AG04450 (cell line): ENCODE measurements at regions of chr7 and their contacts with region 1.

Region 1: GRCh38 chr7:73606801-73607691 is 17.3 kb downstream of the MLXIPL start:
- DNase-seq: no peak
- H3K4me3 ChIP-seq: no peak overlapping the region; the same call in 1 of the 2 replicates
- H3K27ac ChIP-seq: no peak overlapping the region
- H3K27me3 ChIP-seq: peaks cover 9% of the 10 kb centered on the region
- CTCF ChIP-seq: peak; percentile 95

Region 2: GRCh38 chr7:73585196-73585595 is 21.9 kb before region 1 on chr7:
- CTCF ChIA-PET with region 1: interaction called, 12 read pairs
- POLR2A ChIA-PET with region 1: no interaction called
- DNase-seq: no peak
- H3K4me3 ChIP-seq: no peak overlapping the region
- H3K27ac ChIP-seq: no peak overlapping the region
- H3K27me3 ChIP-seq: no peaks in the 10 kb centered on the region
- CTCF ChIP-seq: no peak

Region 3: GRCh38 chr7:73667344-73668102 is 60.5 kb after region 1 on chr7 and contains the start of gene VPS37D:
- CTCF ChIA-PET with region 1: interaction called, 16 read pairs
- POLR2A ChIA-PET with region 1: interaction called, 4 read pairs
- DNase-seq: peak; percentile 57
- H3K4me3 ChIP-seq: peak within 1 kb of the TSS; percentile 73
- H3K27ac ChIP-seq: no peak within 1 kb of the TSS
- H3K27me3 ChIP-seq: peaks cover 6% of the 10 kb centered on the region
- CTCF ChIP-seq: peak; percentile 64
- polyA plus RNA-seq, gene VPS37D: 1.8 and 3.7 TPM in 2 replicates

Region 4: DNA sequence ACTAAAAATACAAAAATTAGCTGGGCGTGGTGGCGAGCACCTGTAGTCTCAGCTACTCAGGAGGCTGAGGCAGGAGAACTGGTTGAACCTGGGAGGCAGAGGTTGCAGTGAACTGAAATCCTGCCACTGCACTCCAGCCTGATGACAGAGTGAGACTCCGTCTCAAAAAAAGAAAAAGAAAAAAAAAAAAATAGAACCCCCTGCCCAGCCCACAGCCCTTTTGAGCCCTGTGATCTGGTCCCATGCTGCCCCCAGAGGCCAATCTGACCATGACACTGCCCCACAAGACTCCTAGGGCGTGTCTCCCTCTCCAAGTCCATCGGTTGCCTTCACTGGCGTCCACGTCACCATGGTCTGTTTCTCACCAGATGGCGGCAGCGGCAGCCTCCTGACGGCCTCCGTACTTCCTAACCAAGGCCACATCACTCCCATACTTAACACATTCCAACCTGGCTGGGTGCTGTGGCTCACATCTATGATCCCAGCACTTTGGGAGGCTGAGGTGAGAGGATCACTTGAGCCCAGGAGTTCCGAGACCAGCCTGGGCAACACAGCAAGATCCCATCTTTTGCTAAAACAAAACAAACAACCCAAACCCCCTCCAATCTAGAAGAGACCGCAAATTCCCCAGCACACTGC is 94.4 kb after region 1 on chr7:
- CTCF ChIA-PET with region 1: interaction called, 17 read pairs
- POLR2A ChIA-PET with region 1: no interaction called
- DNase-seq: no peak
- H3K4me3 ChIP-seq: no peak overlapping the region
- H3K27ac ChIP-seq: no peak overlapping the region
- H3K27me3 ChIP-seq: no peaks in the 10 kb centered on the region
- CTCF ChIP-seq: peak; percentile 60

Region 5: GRCh38 chr7:73726083-73726466 is 119.0 kb after region 1 on chr7:
- CTCF ChIA-PET with region 1: interaction called, 93 read pairs
- POLR2A ChIA-PET with region 1: interaction called, 3 read pairs
- DNase-seq: no peak
- H3K4me3 ChIP-seq: no peak overlapping the region
- H3K27ac ChIP-seq: no peak overlapping the region
- H3K27me3 ChIP-seq: peaks cover 8% of the 10 kb centered on the region
- CTCF ChIP-seq: no peak

Region 6: DNA sequence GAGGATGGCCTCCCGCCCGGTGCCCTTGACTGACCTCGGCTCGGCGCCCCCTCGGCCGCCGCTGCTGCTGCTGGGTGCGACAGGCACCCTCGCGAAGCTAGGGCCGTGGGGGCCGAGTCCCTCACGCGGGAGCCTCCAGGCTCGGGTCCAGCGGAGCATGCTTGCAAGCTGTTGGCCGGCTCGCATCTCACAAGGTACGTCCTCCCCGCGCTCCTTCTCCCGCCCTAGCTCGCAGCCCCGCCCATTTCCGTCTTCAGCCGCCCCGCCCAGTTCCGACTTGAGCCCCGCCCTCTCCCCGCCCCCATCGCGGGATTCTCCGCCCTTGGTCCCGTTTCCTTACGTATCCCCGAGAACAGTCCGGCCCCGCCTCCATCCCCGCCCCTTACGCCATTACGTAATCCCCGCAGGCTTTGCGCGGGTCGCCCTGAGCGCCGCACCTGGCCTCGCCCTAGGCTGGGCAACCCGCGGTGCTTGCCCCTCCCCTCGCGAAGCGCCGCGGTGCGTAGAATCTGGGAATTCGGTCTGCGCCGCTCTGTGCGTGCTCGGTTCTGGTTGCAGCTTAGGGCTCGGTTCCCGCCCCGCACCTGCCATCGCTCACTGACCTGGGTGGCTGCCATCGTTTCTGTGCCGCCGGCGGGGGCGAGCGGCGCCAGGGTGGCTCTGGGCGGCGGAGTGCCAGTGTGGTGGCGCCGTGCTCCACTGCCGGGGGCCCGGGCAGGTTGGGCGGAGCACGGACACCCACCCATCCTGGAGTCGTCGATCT is 131.7 kb after region 1 on chr7 and contains the start of gene ABHD11:
- CTCF ChIA-PET with region 1: interaction called, 24 read pairs
- POLR2A ChIA-PET with region 1: no interaction called
- DNase-seq: peak; percentile 92
- H3K4me3 ChIP-seq: peak within 1 kb of the TSS; percentile 89
- H3K27ac ChIP-seq: peak within 1 kb of the TSS; percentile 31
- H3K27me3 ChIP-seq: no peaks in the 10 kb centered on the region
- CTCF ChIP-seq: no peak
- polyA plus RNA-seq, gene ABHD11: 5.1 and 7.5 TPM in 2 replicates

Region 7: DNA sequence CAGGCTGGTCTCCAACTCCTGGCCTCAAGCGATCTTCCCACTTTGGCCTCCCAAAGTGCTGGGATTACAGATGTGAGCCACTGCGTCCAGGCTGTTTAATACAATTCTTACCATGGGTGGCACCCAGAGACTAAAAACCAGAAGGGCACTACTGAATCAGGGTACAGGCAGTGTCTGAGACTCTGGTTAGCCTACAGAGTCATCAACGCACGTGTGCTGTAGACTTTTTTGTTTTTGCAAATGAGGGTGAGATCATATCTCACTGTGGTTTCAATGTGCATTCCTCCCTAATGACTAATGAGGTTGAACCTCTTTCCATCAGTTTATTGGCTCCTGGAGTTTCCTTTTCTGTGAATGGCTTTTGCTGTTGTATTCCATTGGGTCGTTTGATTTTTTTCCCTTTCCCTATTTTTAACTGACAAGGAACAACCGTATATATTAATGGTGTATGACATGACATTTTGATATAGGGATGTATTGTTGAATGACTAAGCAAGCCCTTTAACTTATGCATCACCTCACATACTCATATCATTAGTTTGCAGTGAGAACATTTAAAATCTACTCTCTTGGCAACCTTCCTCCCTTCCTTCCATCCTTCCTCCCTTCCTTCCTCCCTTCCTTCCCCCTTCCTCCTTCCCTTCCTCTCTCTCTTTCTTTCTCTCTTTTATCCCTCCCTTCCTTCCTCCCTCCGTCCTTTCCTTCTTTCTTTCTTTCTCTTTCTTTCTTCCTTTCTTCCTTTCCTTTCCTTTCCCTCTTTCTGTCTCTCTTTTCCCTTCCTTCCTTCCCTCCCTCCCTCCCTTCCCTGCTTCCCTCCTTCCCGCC is 244.6 kb after region 1 on chr7:
- CTCF ChIA-PET with region 1: interaction called, 18 read pairs
- POLR2A ChIA-PET with region 1: no interaction called
- DNase-seq: peak; percentile 94
- H3K4me3 ChIP-seq: peak overlapping the region; percentile 29; the same call in 1 of the 2 replicates
- H3K27ac ChIP-seq: peak overlapping the region; percentile 100
- H3K27me3 ChIP-seq: no peaks in the 10 kb centered on the region
- CTCF ChIP-seq: no peak